Mammary epithelial cell (primary cell): ENCODE measurements at regions of chr18 and their contacts with region 1.

Region 1: GRCh38 chr18:63730773-63731172 is 28.0 kb downstream of the SERPINB11 start:
- DNase-seq: peak; percentile 74
- H3K4me3 ChIP-seq: no peak overlapping the region
- H3K27ac ChIP-seq: no peak overlapping the region
- H3K4me1 ChIP-seq: peaks cover 19% of the 10 kb centered on the region
- H3K27me3 ChIP-seq: no peaks in the 10 kb centered on the region
- CTCF ChIP-seq: no peak

Region 2: DNA sequence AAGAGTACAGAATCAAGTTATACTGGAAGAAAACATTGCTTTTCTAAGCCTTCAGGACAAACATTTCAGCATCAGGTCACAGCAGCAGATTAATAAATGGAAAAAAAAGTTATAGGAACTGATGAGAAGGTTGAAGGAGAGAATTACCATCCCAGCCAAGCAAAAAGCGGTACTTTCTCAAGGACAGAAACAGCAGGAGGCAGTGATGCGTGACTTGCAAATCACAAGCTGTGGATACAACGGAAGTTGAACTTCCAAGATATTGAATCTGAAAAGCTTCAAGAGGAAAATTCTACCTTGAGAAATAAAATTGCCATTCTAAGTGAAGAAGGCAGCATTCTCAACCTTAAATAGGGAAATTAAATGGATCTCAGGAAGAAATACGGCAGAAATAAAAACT is 207.1 kb before region 1 on chr18:
- CTCF ChIA-PET with region 1: no interaction called
- dilution Hi-C with region 1: no loop called
- in situ Hi-C with region 1: loop called in 1 of 2 experiments (anchors 10 kb)
- intact Hi-C with region 1: no loop called
- DNase-seq: no peak
- H3K4me3 ChIP-seq: no peak overlapping the region
- H3K27ac ChIP-seq: no peak overlapping the region
- H3K4me1 ChIP-seq: no peaks in the 10 kb centered on the region
- H3K27me3 ChIP-seq: no peaks in the 10 kb centered on the region
- CTCF ChIP-seq: peak; percentile 6 to 16

Region 3: DNA sequence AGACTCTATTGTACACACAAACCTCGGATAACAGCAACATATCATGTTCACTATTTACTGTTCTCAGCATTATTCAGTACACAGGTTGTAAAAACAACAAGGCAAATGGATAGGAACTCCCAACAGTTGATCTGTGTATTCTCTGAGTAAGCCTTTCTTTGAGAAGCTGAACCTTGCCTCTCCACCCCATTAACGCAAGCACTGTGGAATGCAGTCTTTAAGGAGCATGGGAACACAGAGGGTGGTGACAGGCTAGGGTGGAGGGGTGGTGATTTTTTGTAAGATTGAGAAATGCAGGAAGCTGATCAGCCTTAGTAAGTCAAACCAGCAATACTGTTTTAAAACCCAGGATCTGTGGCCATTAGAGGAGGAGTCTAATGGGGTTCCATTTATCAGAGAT is 47.6 kb before region 1 on chr18:
- CTCF ChIA-PET with region 1: no interaction called
- dilution Hi-C with region 1: loop called (anchors 5 kb)
- in situ Hi-C with region 1: no loop called
- intact Hi-C with region 1: no loop called
- DNase-seq: peak; percentile 97
- H3K4me3 ChIP-seq: no peak overlapping the region
- H3K27ac ChIP-seq: peak overlapping the region; percentile 82
- H3K4me1 ChIP-seq: peaks cover 16% of the 10 kb centered on the region
- H3K27me3 ChIP-seq: no peaks in the 10 kb centered on the region
- CTCF ChIP-seq: no peak